HepG2 (cell line): ENCODE measurements at regions of chr16 and their contacts with region 1.

Region 1: DNA sequence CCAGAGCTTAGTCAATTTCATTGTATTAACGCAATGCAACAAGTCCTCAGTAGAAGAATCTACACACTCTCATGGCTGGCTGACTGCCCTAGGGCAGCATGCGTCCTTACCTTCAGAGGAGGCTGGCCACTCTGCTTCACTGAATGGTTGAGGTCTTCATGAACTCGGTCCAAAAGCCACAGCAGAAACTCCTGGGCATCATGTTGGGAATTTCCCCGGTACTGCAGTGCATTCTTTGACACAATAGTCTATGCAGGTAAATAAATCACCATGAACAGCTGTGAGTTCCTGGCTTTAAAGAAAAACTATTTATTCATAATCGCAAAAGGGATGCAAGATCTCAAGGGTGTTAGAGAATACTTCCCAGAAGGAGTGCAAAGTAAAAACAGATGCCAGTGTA is 41.3 kb downstream of the USP31 start:
- DNase-seq: no peak
- ATAC-seq: no peak
- H3K4me3 ChIP-seq: no peak overlapping the region
- H3K27ac ChIP-seq: no peak overlapping the region
- H3K4me1 ChIP-seq: peaks cover 57% of the 10 kb centered on the region
- H3K27me3 ChIP-seq: no peaks in the 10 kb centered on the region
- CTCF ChIP-seq: no peak
- EP300 ChIP-seq: no peak
- POLR2A ChIP-seq: no peak
- RAD21 ChIP-seq: no peak

Region 2: DNA sequence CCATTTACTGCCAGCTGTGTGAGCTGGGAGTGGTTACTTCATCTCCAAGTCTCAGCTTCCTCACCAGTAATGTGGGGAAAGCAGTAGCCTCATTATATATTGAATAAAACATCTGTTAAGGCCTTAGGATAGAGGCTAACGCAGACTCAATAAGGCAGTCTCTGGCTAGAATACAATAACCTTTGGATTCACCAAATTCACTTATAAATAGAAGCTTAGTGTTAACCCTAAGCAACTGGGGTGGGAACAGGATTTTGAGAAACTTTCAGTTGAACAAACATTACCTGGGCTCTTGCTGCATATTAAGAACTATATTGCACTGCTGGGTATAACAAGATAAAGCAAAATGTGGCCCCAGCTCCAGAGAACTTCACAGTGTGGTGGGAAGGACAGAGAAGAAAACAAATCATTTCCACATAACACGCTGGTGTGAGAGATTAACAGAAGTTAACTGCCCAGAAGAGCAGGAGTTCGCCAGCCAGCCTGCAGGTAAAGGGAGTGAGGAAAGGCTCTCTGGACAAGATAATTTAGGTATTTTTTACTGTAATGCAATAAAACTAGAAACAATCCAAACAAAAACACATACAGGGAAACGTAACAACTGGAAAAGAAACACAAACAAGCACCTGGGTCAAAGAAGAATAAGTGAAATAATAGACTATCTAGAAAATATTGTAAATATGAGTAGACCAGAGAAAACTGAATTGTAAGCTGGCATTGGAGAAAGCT is 15.7 kb before region 1 on chr16:
- CTCF ChIA-PET with region 1: no interaction called
- POLR2A ChIA-PET with region 1: interaction called, 14 read pairs
- in situ Hi-C with region 1: no loop called
- intact Hi-C with region 1: no loop called
- DNase-seq: no peak
- ATAC-seq: peak; percentile 73
- H3K4me3 ChIP-seq: peak overlapping the region in 2 of 3 experiments; percentile 5 to 29; a peak in 2 of 6 replicates
- H3K27ac ChIP-seq: peak overlapping the region; percentile 67
- H3K4me1 ChIP-seq: peaks cover 55% of the 10 kb centered on the region
- H3K27me3 ChIP-seq: no peaks in the 10 kb centered on the region
- CTCF ChIP-seq: no peak
- EP300 ChIP-seq: no peak
- POLR2A ChIP-seq: no peak
- RAD21 ChIP-seq: no peak

Region 3: GRCh38 chr16:23124315-23124714 is 16.4 kb after region 1 on chr16:
- CTCF ChIA-PET with region 1: no interaction called
- POLR2A ChIA-PET with region 1: no interaction called
- in situ Hi-C with region 1: no loop called
- intact Hi-C with region 1: loop called (anchors 1 kb)
- DNase-seq: no peak
- ATAC-seq: no peak
- H3K4me3 ChIP-seq: no peak overlapping the region
- H3K27ac ChIP-seq: no peak overlapping the region
- H3K4me1 ChIP-seq: peaks cover 36% of the 10 kb centered on the region
- H3K27me3 ChIP-seq: no peaks in the 10 kb centered on the region
- CTCF ChIP-seq: no peak
- EP300 ChIP-seq: no peak
- POLR2A ChIP-seq: no peak
- RAD21 ChIP-seq: no peak

Region 4: GRCh38 chr16:23141959-23142740 is 34.2 kb after region 1 on chr16:
- CTCF ChIA-PET with region 1: no interaction called
- POLR2A ChIA-PET with region 1: interaction called, 22 read pairs
- in situ Hi-C with region 1: loop called (anchors 5 kb)
- intact Hi-C with region 1: loop called (anchors 2 kb)
- DNase-seq: peak; percentile 84
- ATAC-seq: peak; percentile 90
- H3K4me3 ChIP-seq: peak overlapping the region; percentile 18 to 65 (median 38)
- H3K27ac ChIP-seq: peak overlapping the region; percentile 81
- H3K4me1 ChIP-seq: peaks cover 94% of the 10 kb centered on the region
- H3K27me3 ChIP-seq: no peaks in the 10 kb centered on the region
- CTCF ChIP-seq: no peak
- EP300 ChIP-seq: peak in 1 of 2 experiments; percentile 19; a peak in 1 of 4 replicates
- POLR2A ChIP-seq: 0 out of 4 replicates have a peak, but pooled peaks have one; percentile 16 to 33
- RAD21 ChIP-seq: 0 out of 2 replicates have a peak, but pooled peaks have one; percentile 8

Region 5: DNA sequence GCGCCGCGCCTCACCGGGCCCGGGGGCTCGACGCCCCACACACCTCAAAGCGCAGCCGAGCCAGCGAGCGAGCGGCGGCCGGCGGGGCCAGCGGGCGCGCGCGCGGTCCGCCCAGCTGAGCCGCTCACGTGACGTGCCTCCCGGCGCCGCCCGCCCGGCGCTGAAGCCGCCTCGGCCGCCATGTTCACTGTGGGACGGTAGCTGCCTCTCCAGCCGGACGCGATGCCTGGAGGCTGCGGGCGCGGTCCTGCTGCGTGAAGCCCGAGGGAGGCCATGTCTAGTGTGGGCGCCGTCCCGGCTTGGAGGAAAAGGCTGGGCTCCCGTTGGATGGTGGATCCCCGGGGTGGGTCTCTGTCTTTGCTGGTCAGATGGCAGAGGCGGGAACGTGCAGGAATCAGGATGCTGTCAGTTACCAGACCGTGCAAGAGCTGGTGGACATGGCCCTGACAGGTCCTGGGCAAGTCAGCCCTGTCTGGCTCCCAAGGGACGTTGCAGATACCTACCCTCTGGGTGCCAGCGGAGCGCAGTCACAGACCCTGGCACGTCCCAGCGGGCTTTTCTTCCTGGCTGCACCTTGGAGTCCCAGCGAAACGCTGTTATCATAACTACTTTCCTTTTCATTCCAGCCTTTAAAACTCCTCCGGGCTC is 41.5 kb after region 1 on chr16 and contains the start of gene USP31:
- CTCF ChIA-PET with region 1: no interaction called
- POLR2A ChIA-PET with region 1: interaction called, 11 read pairs
- in situ Hi-C with region 1: loop called (anchors 5 kb)
- intact Hi-C with region 1: loop called (anchors 2 kb)
- DNase-seq: peak; percentile 96
- ATAC-seq: peak; percentile 98
- H3K4me3 ChIP-seq: peak within 1 kb of the TSS; percentile 95 to 99 (median 95)
- H3K27ac ChIP-seq: peak within 1 kb of the TSS; percentile 74
- H3K4me1 ChIP-seq: peaks cover 61% of the 10 kb centered on the region
- H3K27me3 ChIP-seq: peaks cover 0 to 5% of the 10 kb centered on the region in 2 experiments; a peak in 1 of 5 replicates
- CTCF ChIP-seq: peak; percentile 28; the same call in 1 of the 2 replicates
- EP300 ChIP-seq: no peak
- POLR2A ChIP-seq: peak in 1 of 2 experiments; percentile 62; a peak in 1 of 4 replicates
- RAD21 ChIP-seq: peak; percentile 47; the same call in 1 of the 2 replicates
- total RNA-seq, gene USP31: 22.5 and 29.1 TPM in 2 replicates